ENCODE measurements at regions of chr13 and their contacts with region 1.

Region 1: GRCh38 chr13:87712012-87712411 is 40.8 kb downstream of the SLITRK5 start:
- DNase-seq: no peak
- H3K4me3 ChIP-seq: no peak overlapping the region
- H3K27ac ChIP-seq: no peak overlapping the region
- H3K4me1 ChIP-seq: no peaks in the 10 kb centered on the region
- CTCF ChIP-seq: no peak

Region 2: DNA sequence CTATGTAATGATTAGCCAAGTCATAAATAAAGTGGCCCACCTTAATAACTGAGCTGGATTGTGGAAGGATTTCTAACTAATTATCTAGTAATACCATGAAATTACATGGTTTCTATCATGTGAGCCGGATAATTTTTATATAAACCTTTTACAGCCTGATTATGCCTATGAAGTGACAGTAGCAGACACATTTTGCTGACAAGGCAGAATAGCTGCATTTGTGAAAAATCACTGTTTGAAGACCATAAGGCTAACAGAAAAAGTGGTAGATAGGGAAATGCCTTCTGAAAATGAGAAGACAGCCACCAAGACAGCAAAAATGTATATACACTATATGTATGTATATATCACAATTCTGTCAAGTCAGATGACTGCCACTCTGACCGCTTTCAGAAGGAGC is 13.7 kb before region 1 on chr13:
- CTCF ChIA-PET with region 1: no interaction called
- POLR2A ChIA-PET with region 1: interaction called, 10 read pairs
- intact Hi-C with region 1: no loop called
- DNase-seq: no peak
- H3K4me3 ChIP-seq: no peak overlapping the region
- H3K27ac ChIP-seq: no peak overlapping the region
- H3K4me1 ChIP-seq: peaks cover under 1% of the 10 kb centered on the region
- CTCF ChIP-seq: no peak

Region 3: GRCh38 chr13:87769445-87769844 is 57.4 kb after region 1 on chr13:
- CTCF ChIA-PET with region 1: no interaction called
- POLR2A ChIA-PET with region 1: no interaction called
- intact Hi-C with region 1: loop called (anchors 5 kb)
- DNase-seq: no peak
- H3K4me3 ChIP-seq: no peak overlapping the region
- H3K27ac ChIP-seq: no peak overlapping the region
- H3K4me1 ChIP-seq: no peaks in the 10 kb centered on the region
- CTCF ChIP-seq: no peak